ENCODE measurements at regions of chr19 and their contacts with region 1.

Region 1: DNA sequence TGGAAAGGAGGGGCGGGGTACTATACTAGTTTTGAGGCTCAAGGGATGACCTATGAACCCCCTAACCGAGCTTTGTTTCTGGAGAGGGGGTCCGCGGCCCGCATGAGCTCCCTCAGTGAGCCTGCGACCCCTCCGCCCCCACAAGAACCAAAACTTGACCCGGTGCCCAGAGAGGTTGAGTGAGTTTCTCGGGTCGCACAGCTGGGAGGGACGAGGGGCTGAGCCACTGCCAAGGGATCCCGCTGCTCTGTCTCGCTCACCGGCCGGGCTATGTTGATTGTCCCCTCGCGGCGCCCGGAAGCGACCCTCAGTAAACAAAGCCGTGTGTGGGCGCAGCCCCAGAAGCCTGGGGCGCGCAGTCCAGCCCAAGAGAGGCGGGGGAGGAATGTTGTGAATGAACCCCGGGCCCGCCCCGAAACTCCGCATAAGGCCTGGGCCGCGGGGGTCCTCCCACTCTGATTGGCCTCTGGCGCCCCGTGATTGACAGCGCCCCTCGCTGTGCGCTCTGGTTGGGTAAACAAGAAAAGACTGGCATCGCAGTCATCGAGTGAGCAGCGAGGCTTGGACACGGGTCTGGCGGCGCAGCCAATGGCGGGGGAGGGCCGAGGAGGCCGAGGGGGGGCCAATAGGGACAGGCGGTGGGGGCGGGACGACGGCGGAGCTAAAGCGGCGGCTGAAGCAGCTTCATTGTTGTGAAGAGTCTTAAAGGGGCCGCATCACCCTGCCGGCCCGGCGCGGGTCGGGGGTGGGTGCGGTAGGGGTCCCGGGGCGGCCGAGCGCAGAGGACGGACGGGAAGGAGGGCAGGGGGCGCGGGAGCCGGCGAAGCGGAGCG is at the start of gene ZSWIM4:
- DNase-seq: peak; percentile 99
- H3K4me3 ChIP-seq: peak within 1 kb of the TSS; percentile 92 to 96
- H3K27ac ChIP-seq: peak within 1 kb of the TSS; percentile 92 to 93
- H3K4me1 ChIP-seq: peaks cover 9% of the 10 kb centered on the region
- H3K27me3 ChIP-seq: no peaks in the 10 kb centered on the region
- CTCF ChIP-seq: peak in 2 of 4 experiments; percentile 8 to 33
- POLR2A ChIP-seq: peak; percentile 72
- total RNA-seq, gene ZSWIM4: 9.7 to 14.2 TPM

Region 2: DNA sequence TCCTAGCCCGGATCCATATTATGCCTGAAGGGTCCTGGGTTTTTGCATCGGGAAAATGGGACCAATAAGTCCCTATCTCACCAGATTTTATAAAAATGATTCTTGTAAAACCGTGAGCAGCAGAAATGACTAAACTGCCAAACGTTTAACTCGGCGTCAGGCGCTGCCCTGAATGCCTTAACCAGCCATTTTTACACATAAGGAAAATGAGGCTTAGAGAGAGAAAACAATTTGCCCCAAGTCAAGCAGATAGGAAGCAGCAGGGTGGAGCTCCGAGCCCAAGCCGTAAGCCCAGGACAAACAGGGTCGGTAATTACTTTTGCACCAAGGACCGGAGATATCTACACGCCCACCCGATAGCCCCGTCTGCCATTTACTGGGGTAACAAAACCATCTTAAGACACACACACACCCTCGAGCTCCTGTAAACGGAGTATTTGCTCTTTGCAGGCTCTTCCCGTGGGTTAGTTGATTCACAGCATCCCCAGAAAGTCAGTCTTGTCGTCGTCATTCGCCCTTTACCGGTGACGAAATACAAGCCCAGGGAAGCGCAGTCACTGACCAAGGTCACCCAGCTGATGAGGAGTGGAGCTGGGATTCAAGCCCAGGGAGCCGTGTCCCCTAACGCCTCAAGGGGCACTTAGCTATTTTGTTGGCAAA is 46.7 kb before region 1 on chr19:
- intact Hi-C with region 1: no loop called
- DNase-seq: no peak
- H3K4me3 ChIP-seq: peak overlapping the region; percentile 71 to 80
- H3K27ac ChIP-seq: peak overlapping the region; percentile 83 to 84
- H3K4me1 ChIP-seq: peaks cover 5% of the 10 kb centered on the region
- H3K27me3 ChIP-seq: no peaks in the 10 kb centered on the region
- CTCF ChIP-seq: no peak
- POLR2A ChIP-seq: no peak

Region 3: GRCh38 chr19:13839130-13839937 is 44.4 kb after region 1 on chr19:
- intact Hi-C with region 1: loop called (anchors 5 kb)
- DNase-seq: peak; percentile 77
- H3K4me3 ChIP-seq: peak overlapping the region; percentile 91 to 96
- H3K27ac ChIP-seq: peak overlapping the region; percentile 98 to 99
- H3K4me1 ChIP-seq: peaks cover 18% of the 10 kb centered on the region
- H3K27me3 ChIP-seq: no peaks in the 10 kb centered on the region
- CTCF ChIP-seq: peak in 1 of 4 experiments; percentile 6
- POLR2A ChIP-seq: peak; percentile 56

Region 4: DNA sequence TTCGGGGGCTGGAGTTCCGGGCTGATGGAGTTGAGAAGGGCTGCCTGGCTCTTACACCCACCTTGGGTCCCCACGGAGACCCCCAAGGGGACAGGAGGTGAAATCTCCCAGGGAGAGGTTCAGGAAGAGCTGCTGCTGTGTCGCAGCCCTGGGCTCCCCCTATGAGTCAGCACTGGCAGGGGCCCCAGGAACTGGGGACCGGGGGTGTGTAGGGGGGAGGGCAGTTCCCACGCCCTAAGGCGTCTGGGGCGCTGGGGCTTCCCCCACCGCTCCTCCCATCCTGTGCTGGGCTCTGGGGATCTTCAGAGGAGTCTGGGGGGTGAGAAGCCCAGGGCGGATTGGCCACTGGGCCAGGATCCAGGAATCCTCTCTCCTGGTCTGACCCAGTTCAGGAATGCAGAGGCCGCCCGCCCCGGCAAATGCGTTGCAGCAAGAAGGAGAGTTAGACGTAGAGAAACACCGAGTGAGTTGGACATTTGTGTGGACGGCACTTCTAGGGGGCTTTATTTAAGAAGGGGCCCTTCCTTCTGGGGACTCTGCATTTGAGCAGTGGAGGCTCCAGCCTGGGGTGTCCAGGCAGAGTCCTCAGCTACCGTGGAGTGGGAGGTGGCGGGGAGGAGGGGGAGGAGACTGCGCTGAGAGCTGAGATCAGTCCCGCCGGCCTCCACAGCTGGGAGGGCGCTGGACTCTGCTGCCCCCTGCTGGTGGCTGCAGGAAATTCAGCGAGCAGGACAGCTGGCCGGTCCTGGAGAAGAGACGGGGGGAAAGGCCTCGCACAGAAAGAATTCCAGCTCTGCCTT is 67.0 kb after region 1 on chr19:
- intact Hi-C with region 1: no loop called
- DNase-seq: peak; percentile 89
- H3K4me3 ChIP-seq: peak overlapping the region; percentile 22 to 31
- H3K27ac ChIP-seq: peak overlapping the region; percentile 82 to 85
- H3K4me1 ChIP-seq: peaks cover 8% of the 10 kb centered on the region
- H3K27me3 ChIP-seq: no peaks in the 10 kb centered on the region
- CTCF ChIP-seq: peak; percentile 95 to 99 (median 98)
- POLR2A ChIP-seq: peak; percentile 8